ENCODE measurements at regions of chr16 and their contacts with region 1.

Region 1: GRCh38 chr16:391885-392335 is 5.1 kb upstream of the NME4 start:
- DNase-seq: peak in 6 of 10 donors; percentile 53 to 76 (median 70)
- H3K4me3 ChIP-seq: no peak overlapping the region
- H3K27ac ChIP-seq: peak overlapping the region in 1 of 59 donors; percentile 12
- H3K27me3 ChIP-seq: no peaks in the 10 kb centered on the region
- CTCF ChIP-seq: peak in 55 of 56 donors; percentile 25 to 80 (median 70)

Region 2: DNA sequence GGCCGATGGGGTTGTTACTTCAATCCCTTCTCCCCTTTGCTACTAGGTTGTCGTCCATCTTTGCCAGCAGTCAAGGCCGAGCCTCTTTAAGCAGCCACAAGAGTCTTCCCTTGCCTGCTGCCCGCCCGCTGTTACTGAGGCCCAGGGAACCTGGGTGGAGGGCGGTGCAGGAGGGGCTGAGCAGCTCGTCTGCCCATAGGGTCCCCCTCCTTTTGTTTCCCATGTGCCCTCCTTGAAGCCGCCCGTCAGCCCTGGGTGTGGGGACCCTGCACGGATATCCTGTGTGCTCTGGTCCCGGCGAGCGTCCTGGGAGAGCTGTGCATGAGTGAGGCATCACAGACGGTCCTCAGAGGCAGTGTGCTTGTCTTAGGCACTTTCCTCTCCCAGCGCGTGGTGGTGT is 97.7 kb after region 1 on chr16:
- intact Hi-C with region 1: loop called in 1 of 2 experiments (anchors 5 kb)
- DNase-seq: no peak
- H3K4me3 ChIP-seq: no peak overlapping the region
- H3K27ac ChIP-seq: no peak overlapping the region
- H3K27me3 ChIP-seq: no peaks in the 10 kb centered on the region
- CTCF ChIP-seq: no peak